Common myeloid progenitor, CD34-positive (primary cell): ENCODE measurements at regions of chr4 and their contacts with region 1.

Region 1: DNA sequence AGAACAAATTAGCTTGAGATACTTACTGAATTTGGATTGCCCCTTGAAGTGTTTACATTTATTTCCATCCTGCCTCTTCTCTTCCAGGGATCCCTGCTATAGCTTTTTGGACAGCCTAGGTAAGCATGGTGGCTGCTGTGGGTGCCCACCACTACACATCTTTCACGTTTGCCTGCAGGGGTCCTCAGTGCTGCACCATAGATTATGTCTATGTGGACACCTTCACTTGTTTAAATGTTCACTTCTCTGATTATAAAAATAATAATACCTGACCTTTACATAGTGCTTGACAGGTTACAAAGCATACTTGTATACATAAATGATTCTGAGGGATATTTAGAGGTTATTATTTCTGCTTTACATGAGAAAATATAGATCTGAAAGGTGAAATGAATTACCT is 67.9 kb upstream of the SLC4A4 start:
- DNase-seq: peak; percentile 63 to 80 (median 74)
- H3K4me3 ChIP-seq: no peak overlapping the region
- H3K27ac ChIP-seq: no peak overlapping the region
- H3K4me1 ChIP-seq: peaks cover 0 to 10% (median 4%) of the 10 kb centered on the region in 4 experiments
- H3K27me3 ChIP-seq: peaks cover 0 to 58% (median 17%) of the 10 kb centered on the region in 5 experiments

Region 2: DNA sequence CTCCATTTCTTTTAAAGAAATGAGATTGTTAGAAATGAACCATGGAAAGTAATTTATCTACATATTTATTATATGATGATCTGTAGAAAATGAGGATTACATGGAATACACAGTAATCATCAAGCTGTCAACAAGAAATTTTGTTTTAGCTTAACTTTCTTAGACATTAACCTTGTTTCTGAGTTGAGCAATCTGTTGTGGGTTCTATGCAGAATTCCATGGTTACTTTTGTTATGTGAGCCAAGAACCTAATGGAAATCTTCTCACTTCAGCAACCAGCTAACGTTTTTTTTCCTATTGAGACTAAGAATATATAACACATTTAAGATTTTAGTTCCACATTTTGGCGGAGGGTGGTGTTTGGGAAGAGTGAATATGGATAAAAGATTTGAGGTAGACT is 68.2 kb before region 1 on chr4:
- CTCF ChIA-PET with region 1: no interaction called
- POLR2A ChIA-PET with region 1: no interaction called
- DNase-seq: no peak
- H3K4me3 ChIP-seq: no peak overlapping the region
- H3K27ac ChIP-seq: no peak overlapping the region
- H3K4me1 ChIP-seq: no peaks in the 10 kb centered on the region
- H3K27me3 ChIP-seq: peaks cover 0 to 1% (median 0%) of the 10 kb centered on the region in 5 experiments

Region 3: DNA sequence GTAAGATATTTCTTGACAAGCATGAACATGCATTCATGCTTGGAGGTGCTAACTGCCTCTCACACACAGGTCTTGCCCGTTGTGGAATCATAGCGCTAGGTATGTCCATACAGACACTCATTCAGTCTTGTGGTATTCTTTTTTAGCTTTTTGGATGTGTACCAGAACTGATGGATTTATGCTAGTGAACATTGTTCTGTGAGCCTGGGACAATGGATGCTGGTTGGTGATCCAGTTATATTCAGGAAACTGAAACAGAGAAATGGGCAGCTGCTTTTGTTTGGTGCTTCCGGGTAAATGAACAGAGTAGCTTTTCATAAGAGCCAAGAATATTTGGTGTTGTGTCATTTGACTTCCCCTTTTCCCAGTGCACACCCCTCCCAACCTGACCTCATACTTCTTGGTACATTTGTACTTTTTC is 11.0 kb before region 1 on chr4:
- CTCF ChIA-PET with region 1: interaction called, 32 read pairs
- POLR2A ChIA-PET with region 1: no interaction called
- DNase-seq: peak; percentile 28 to 73 (median 64)
- H3K4me3 ChIP-seq: no peak overlapping the region
- H3K27ac ChIP-seq: no peak overlapping the region
- H3K4me1 ChIP-seq: peaks cover 0 to 7% (median 0%) of the 10 kb centered on the region in 4 experiments
- H3K27me3 ChIP-seq: peaks cover 0 to 6% (median 2%) of the 10 kb centered on the region in 5 experiments

Region 4: DNA sequence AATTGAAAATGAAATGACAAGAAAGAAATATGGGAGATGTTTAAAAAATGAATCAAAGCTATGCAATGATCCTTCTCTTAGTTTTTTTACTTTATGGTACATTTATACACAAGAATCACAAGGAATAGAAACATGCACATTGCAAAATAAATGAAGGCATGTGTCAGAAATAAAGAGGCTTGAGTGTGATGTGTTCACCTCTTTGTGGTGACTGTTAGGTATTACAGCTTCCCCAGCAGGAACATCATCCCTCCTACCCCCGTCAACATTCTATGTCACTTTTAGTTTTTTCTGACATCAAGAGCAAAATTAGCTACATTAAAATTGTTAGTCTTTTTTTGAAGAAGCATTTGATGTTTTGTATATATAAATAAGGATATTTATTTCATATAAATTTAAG is 282.7 kb after region 1 on chr4:
- CTCF ChIA-PET with region 1: interaction called, 14 read pairs
- POLR2A ChIA-PET with region 1: no interaction called
- DNase-seq: peak; percentile 34 to 64 (median 61)
- H3K4me3 ChIP-seq: no peak overlapping the region
- H3K27ac ChIP-seq: no peak overlapping the region
- H3K4me1 ChIP-seq: no peaks in the 10 kb centered on the region
- H3K27me3 ChIP-seq: peaks cover 0 to 36% (median 9%) of the 10 kb centered on the region in 5 experiments

Region 5: GRCh38 chr4:71713611-71714203 is 442.8 kb after region 1 on chr4:
- CTCF ChIA-PET with region 1: interaction called, 78 read pairs
- POLR2A ChIA-PET with region 1: no interaction called
- DNase-seq: peak; percentile 48 to 77 (median 67)
- H3K4me3 ChIP-seq: no peak overlapping the region
- H3K27ac ChIP-seq: no peak overlapping the region
- H3K4me1 ChIP-seq: no peaks in the 10 kb centered on the region
- H3K27me3 ChIP-seq: peaks cover 0 to 5% (median 4%) of the 10 kb centered on the region in 5 experiments